ENCODE measurements at regions of chr4 and their contacts with region 1.

Region 1: DNA sequence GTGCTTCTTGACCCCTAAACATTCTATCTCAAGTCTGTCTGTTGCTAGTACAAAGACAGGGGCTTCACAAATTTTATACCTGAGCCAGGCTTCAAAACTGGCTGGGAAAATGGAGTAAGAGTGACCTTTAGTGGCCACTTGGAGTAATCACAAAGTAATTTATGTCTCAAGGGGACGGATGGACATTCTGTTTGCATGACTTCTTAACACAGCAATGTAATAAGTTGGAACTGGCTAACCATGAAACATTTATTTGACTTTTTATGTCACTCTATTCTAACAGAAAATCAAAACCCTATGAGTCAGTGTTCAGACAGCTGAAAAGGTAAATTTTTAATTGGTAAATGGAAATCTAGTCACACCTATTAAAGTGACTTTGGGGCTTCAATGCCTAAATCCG is 600.6 kb downstream of the ANKRD50 start:
- DNase-seq: peak; percentile 13
- H3K4me3 Mint-ChIP-seq: no peak overlapping the region
- H3K27ac Mint-ChIP-seq: no peak overlapping the region
- H3K4me1 Mint-ChIP-seq: no peaks in the 10 kb centered on the region
- H3K27me3 Mint-ChIP-seq: no peaks in the 10 kb centered on the region
- CTCF ChIP-seq: no peak

Region 2: DNA sequence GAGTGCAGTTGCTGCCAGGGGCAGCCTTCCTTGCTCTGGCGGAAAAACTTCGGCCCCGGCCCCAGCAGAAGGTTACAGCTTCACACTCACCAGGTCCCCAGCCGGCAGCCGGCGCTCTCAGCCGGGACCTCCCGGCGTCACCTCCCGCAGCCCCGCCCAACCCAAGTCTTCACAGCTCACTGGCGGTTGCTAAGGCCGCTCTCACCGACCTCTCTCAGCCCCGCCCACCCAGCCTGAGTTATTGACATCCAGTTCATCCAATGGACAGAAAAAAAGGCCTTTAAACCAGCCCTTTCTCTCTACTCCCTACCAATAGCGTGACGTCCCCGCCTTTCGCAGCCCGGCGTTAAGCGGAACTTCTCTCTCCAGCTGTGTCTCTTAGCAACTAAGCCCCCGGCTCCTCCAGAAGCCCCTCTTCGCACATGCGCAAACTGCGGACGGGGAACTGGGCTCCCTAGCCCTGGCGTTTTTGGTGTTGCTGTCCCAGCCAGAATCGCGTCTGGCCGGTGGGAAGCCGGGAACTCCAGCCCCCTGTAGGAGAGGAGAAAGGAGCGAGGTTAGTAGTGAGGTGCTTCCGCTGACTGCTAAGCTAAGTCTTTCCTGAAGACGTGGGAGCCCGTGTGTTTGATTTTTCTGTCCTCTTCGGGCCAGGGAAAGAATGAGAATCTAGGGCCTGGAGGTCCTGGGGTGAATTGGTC is 1379.4 kb before region 1 on chr4 and contains the start of gene BBS12:
- CTCF ChIA-PET with region 1: no interaction called
- intact Hi-C with region 1: no loop called
- DNase-seq: peak; percentile 96
- H3K4me3 Mint-ChIP-seq: peak within 1 kb of the TSS; percentile 83
- H3K27ac Mint-ChIP-seq: peak within 1 kb of the TSS; percentile 92
- H3K4me1 Mint-ChIP-seq: no peaks in the 10 kb centered on the region
- H3K27me3 Mint-ChIP-seq: no peaks in the 10 kb centered on the region
- CTCF ChIP-seq: no peak
- total RNA-seq, gene BBS12: 2.4 TPM in 2 replicates

Region 3: DNA sequence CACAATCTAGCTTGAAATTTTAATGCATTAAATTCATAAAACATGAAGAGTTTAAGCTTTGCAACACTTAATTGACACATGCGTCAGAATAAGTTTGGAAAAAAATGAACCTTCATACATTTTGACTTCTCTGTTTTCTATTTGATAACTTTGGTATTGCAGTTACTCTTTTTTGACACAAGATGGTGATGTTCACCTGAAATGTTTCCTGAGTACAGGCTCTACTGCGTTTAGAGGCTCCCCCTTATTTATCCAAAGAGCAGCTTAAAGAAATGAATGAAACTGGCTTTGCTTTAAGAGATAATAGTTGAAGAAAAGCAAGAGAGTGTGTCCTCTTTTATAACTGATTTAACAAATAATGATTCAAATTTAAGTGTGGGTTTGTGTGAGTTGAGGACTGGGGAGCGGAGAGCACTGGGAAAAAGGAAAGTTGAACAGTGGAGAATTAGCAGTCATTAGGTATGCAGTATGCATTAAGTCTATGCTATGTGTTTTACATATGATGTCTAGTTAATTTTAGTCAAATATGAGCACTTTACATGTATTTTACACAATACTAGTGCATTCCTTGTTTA is 1008.9 kb before region 1 on chr4:
- CTCF ChIA-PET with region 1: no interaction called
- intact Hi-C with region 1: loop called (anchors 5 kb)
- DNase-seq: no peak
- H3K4me3 Mint-ChIP-seq: no peak overlapping the region
- H3K27ac Mint-ChIP-seq: no peak overlapping the region
- H3K4me1 Mint-ChIP-seq: peaks cover 7% of the 10 kb centered on the region
- H3K27me3 Mint-ChIP-seq: no peaks in the 10 kb centered on the region
- CTCF ChIP-seq: peak; percentile 33

Region 4: DNA sequence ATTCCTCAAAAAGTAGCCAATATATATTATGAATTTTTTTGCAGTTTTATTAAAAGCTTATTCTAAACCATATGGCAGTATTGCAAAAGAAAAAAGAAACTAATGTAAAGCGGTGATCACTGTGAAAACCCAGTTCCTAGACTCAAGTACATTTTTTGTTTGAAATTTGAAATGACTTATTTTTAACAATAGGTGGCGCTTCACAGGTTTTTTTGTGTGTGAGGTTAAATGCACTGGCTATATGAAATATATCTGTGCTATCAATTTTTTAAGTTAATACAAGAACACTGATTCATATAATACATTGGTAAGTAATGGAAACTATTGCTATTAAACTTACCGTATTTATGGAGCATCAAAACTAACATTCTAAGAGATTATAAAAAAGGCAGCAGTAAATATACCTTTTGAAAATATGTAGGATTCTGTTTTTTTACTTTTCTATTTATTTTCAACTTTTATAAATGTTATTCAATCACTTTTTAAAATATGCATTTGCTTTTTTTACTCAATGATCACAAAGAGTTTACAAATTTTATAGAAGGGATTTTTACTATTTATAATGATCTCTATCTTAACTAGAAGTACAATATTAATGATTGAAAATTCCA is 721.0 kb before region 1 on chr4:
- CTCF ChIA-PET with region 1: no interaction called
- intact Hi-C with region 1: loop called (anchors 1 kb)
- DNase-seq: no peak
- H3K4me3 Mint-ChIP-seq: no peak overlapping the region
- H3K27ac Mint-ChIP-seq: no peak overlapping the region
- H3K4me1 Mint-ChIP-seq: no peaks in the 10 kb centered on the region
- H3K27me3 Mint-ChIP-seq: no peaks in the 10 kb centered on the region
- CTCF ChIP-seq: no peak

Region 5: DNA sequence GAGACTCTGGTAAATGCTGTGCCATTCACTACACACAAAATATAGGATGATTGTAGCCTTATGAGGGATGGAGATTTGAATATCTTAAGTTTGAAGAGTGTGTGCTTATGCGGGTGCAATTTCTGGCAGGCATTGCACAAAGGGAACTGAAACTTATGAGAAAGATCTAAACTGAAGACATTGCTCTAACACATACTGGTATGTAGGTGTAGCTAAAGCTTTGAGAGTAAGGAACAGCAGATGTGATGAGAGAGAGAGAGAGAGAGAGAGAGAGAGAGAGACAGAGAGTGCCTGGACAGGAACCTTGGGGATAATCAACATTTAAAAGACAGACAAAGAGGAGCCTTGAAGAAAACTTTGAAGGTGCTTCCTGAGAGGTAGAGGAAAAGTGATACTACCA is 335.7 kb before region 1 on chr4:
- CTCF ChIA-PET with region 1: interaction called, 5 read pairs
- intact Hi-C with region 1: loop called (anchors 2 kb)
- DNase-seq: no peak
- H3K4me3 Mint-ChIP-seq: no peak overlapping the region
- H3K27ac Mint-ChIP-seq: no peak overlapping the region
- H3K4me1 Mint-ChIP-seq: peaks cover 6% of the 10 kb centered on the region
- H3K27me3 Mint-ChIP-seq: no peaks in the 10 kb centered on the region
- CTCF ChIP-seq: no peak

Region 6: DNA sequence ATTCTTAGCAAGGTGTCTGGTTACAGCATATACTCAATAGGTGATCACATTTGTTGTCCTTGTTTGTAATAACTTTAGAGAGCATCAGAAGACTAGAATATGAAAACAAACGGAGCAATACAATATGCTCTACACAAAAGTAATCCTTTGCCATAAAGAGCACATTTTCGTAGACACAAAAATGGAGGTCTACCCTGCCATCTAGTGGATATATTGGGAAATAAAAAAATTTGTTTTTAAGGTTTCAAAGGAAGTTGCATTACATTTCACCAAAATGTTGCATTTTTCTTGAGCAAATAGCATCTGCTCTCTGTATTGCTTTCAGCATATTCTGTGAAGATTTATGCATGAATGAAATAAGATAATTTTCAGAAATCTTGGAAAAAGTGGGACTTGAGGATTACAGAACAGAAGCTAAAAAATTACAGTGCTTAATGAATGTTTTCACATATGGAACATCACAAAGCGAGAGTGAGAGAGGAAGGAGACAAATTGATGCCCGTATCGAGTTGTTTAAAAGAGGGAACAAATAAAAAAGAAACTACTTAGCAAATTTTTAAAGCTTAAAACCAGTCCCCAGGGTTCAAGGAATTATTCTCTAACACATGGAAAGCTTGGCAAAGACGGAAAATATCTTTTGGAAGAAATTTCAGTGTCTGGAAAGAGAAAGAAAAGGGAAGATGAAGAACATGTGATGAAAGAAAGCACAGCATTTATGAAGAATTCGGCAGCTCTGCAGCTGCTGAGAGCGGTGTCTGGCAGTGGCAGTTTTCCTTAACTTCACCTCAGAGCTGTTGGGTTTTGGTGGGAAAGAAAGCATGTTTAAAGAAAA is 210.5 kb after region 1 on chr4:
- CTCF ChIA-PET with region 1: no interaction called
- intact Hi-C with region 1: loop called (anchors 5 kb)
- DNase-seq: no peak
- H3K4me3 Mint-ChIP-seq: no peak overlapping the region
- H3K27ac Mint-ChIP-seq: no peak overlapping the region
- H3K4me1 Mint-ChIP-seq: peaks cover 7% of the 10 kb centered on the region
- H3K27me3 Mint-ChIP-seq: no peaks in the 10 kb centered on the region
- CTCF ChIP-seq: no peak

Region 7: GRCh38 chr4:125010796-125011503 is 899.0 kb after region 1 on chr4:
- CTCF ChIA-PET with region 1: no interaction called
- intact Hi-C with region 1: no loop called
- DNase-seq: no peak
- H3K4me3 Mint-ChIP-seq: no peak overlapping the region
- H3K27ac Mint-ChIP-seq: no peak overlapping the region
- H3K4me1 Mint-ChIP-seq: no peaks in the 10 kb centered on the region
- H3K27me3 Mint-ChIP-seq: no peaks in the 10 kb centered on the region
- CTCF ChIP-seq: no peak

Measured in Calu3 (cell line).